ENCODE measurements at regions of chr2 and their contacts with region 1.

Region 1: GRCh38 chr2:25700221-25700660 is 26.9 kb upstream of the DTNB start:
- DNase-seq: peak; percentile 54
- ATAC-seq: peak; percentile 48
- H3K4me3 Mint-ChIP-seq: no peak overlapping the region
- H3K27ac Mint-ChIP-seq: no peak overlapping the region
- H3K4me1 Mint-ChIP-seq: peaks cover 5% of the 10 kb centered on the region
- H3K27me3 Mint-ChIP-seq: peaks cover 2% of the 10 kb centered on the region

Region 2: DNA sequence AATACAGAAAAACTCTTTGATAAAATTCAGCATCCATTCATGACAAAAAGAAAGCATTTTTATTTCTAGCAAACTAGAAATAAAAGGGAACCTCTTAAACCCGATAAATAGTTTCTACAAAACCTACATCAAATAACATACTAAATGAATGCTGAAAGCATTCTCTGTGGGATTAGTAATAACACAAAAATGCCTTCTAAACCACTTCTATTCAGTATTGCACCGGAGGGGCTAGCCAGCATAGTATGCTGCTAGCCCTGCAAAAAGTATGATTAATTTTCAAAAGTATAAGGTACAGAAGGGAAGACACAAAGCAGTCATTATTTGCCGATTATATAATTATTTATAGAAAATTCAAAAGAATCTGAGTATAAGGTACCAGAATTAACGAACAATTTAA is 172.1 kb before region 1 on chr2:
- CTCF ChIA-PET with region 1: no interaction called
- DNase-seq: no peak
- ATAC-seq: no peak
- H3K4me3 Mint-ChIP-seq: no peak overlapping the region
- H3K27ac Mint-ChIP-seq: no peak overlapping the region
- H3K4me1 Mint-ChIP-seq: peaks cover 21% of the 10 kb centered on the region
- H3K27me3 Mint-ChIP-seq: no peaks in the 10 kb centered on the region

Region 3: DNA sequence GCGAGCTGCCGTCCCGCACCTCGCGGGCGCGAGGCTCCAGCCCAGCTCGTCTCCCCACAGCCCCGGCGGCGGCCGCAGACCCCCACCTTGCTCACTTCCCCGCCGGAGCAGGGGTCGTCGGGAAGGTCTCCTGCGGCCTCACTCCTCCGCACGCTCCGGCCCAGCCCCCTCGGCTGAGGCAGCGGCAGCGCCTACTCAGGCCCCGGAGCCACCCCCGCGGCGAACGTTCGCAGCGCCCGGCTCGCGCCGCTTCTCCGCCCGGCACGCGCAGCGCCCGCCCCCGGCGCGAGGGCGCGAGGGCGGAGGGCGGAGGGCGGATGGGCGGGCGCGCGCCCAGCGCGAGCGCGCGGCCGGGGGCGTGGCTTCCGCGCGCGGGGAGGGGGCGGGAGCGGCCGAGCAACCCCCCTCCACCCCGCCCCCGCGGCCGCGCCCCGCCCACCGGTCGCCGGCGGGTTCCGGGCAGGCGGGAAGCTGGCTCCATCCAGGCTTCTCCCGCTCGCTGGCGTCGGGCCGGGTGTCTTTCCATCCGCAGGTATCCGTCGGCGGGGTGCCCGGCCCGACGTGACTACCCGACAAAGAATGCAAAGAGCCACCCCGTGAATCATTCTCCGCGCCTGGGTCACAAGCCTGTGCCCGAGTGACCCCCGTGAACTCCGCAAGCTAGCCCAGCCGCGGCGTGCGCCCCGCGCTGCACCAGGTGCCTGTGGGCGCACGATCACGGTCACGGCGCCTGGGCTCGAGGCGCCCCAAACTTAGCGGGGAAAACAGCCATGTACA is 26.8 kb before region 1 on chr2 and contains the start of gene DTNB:
- CTCF ChIA-PET with region 1: interaction called, 16 read pairs
- DNase-seq: peak; percentile 82
- ATAC-seq: peak; percentile 84
- H3K4me3 Mint-ChIP-seq: peak within 1 kb of the TSS; percentile 80
- H3K27ac Mint-ChIP-seq: peak within 1 kb of the TSS; percentile 69
- H3K4me1 Mint-ChIP-seq: peaks cover 27% of the 10 kb centered on the region
- H3K27me3 Mint-ChIP-seq: peaks cover 22% of the 10 kb centered on the region
- total RNA-seq, gene DTNB: 23.7 to 49.8 TPM

Region 4: DNA sequence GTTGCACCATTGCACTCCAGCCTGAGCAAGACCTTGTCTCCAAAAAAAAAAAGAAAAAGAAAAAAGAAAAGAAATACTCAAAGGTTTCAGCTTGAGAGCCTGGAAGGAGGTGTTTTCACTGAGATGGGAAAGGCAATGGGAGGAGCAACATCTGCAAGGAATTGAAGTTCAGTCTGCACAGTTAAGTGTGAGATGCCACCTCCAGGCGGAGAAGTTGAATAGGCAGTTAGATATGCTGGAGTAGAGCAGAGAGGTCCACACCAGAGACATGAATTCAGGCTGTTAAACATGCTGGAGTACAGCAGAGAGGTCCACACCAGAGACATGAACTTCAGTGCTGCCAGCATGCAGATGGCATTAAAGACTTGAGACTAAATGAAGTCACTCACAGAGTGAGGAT is 14.5 kb after region 1 on chr2:
- CTCF ChIA-PET with region 1: interaction called, 11 read pairs
- DNase-seq: no peak
- ATAC-seq: no peak
- H3K4me3 Mint-ChIP-seq: no peak overlapping the region
- H3K27ac Mint-ChIP-seq: no peak overlapping the region
- H3K4me1 Mint-ChIP-seq: peaks cover 19% of the 10 kb centered on the region
- H3K27me3 Mint-ChIP-seq: no peaks in the 10 kb centered on the region

Region 5: GRCh38 chr2:25787013-25787412 is 86.8 kb after region 1 on chr2:
- CTCF ChIA-PET with region 1: no interaction called
- DNase-seq: no peak
- ATAC-seq: no peak
- H3K4me3 Mint-ChIP-seq: no peak overlapping the region
- H3K27ac Mint-ChIP-seq: no peak overlapping the region
- H3K4me1 Mint-ChIP-seq: peaks cover 44% of the 10 kb centered on the region
- H3K27me3 Mint-ChIP-seq: no peaks in the 10 kb centered on the region

Measured in activated CD8-positive, alpha-beta memory T cell treated with anti-CD3 and anti-CD28 coated beads, Interleukin-2, amount 10 ng/mL, durations not matched to agents 7 days and 5 days (primary cell).